BJ (cell line): ENCODE measurements at regions of chr2 and their contacts with region 1.

Region 1: GRCh38 chr2:86453836-86454235 is 12.7 kb downstream of the KDM3A start:
- DNase-seq: peak; percentile 25
- H3K4me3 ChIP-seq: no peak overlapping the region
- H3K27me3 ChIP-seq: no peaks in the 10 kb centered on the region
- CTCF ChIP-seq: no peak

Region 2: GRCh38 chr2:86263715-86264562 is 189.9 kb before region 1 on chr2:
- CTCF ChIA-PET with region 1: no interaction called
- POLR2A ChIA-PET with region 1: no interaction called
- DNase-seq: no peak
- H3K4me3 ChIP-seq: no peak overlapping the region
- H3K27me3 ChIP-seq: no peaks in the 10 kb centered on the region
- CTCF ChIP-seq: no peak

Region 3: GRCh38 chr2:86476092-86476491 is 22.3 kb after region 1 on chr2:
- CTCF ChIA-PET with region 1: interaction called, 4 read pairs
- POLR2A ChIA-PET with region 1: interaction called, 11 read pairs
- DNase-seq: peak; percentile 11
- H3K4me3 ChIP-seq: no peak overlapping the region
- H3K27me3 ChIP-seq: no peaks in the 10 kb centered on the region
- CTCF ChIP-seq: no peak